Lower lobe of right lung (tissue), 2 donors: ENCODE measurements at regions of chr4 and their contacts with region 1.

Region 1: GRCh38 chr4:183261953-183262775 is 57.9 kb downstream of the CLDN22 start:
- DNase-seq: peak; percentile 83
- ATAC-seq: peak; percentile 92 to 96
- H3K4me3 ChIP-seq: no peak overlapping the region
- H3K27ac ChIP-seq: peak overlapping the region; percentile 28
- H3K4me1 ChIP-seq: peaks cover 21% of the 10 kb centered on the region
- H3K27me3 ChIP-seq: no peaks in the 10 kb centered on the region
- CTCF ChIP-seq: peak; percentile 72

Region 2: GRCh38 chr4:182938205-182938645 is 323.9 kb before region 1 on chr4:
- intact Hi-C with region 1: loop called (anchors 5 kb)
- DNase-seq: peak; percentile 79
- ATAC-seq: peak; percentile 98 to 99
- H3K4me3 ChIP-seq: no peak overlapping the region
- H3K27ac ChIP-seq: no peak overlapping the region
- H3K4me1 ChIP-seq: no peaks in the 10 kb centered on the region
- H3K27me3 ChIP-seq: no peaks in the 10 kb centered on the region
- CTCF ChIP-seq: peak; percentile 90